H1 (cell line): ENCODE measurements at regions of chr2 and their contacts with region 1.

Region 1: DNA sequence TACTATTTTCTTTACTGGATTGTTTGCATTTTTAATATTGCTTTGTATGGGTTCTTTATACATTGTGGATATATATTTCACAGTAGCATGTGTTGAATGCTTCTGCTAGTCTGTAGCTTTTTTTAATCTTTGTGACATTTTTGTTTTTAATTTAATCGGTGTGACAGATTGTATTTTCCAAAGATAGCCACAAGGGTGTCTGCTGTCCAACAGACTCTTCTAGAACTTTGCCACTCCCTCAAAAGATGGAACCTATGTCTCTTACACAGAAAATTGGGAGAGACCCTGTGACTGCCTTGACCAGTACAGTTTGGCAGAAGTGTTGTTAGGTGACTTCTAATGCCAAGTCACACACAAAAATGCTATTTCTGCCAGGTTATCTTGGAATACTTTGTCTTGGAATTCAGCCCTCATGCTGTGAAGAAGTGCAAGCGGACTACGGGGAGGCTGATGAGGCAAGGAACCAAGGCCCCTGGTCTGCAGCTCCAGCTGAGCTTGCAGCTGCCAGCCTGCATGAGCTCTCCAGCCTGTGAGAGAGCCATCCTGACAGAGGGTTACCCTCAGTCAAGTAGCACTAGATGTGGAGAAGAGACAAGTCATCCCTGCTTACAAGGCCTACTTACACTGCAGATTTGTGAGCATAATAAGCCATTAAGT is 110.8 kb downstream of the TDRD15 start:
- DNase-seq: no peak
- H3K4me3 ChIP-seq: no peak overlapping the region
- H3K27ac ChIP-seq: no peak overlapping the region
- H3K4me1 ChIP-seq: no peaks in the 10 kb centered on the region
- H3K27me3 ChIP-seq: no peaks in the 10 kb centered on the region
- CTCF ChIP-seq: no peak
- EP300 ChIP-seq: no peak
- POLR2A ChIP-seq: no peak
- RAD21 ChIP-seq: no peak

Region 2: DNA sequence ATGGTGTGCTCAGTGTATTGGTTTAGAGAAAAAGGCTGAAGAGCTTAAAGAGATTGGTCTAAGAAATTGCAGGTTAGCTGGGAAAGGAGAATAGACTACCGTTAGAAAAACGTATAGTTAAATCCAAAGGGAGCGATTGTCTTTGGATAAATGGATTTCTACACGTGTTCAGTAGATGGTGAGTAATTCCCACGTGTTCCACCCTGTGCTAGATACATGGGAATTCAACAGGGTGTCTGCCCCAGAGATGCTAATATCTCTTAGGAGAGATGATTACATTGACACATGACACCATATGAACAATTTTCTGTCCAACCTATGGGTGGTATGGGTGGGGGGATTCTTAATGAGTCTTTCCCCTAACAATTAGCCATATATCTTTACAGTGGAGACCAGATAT is 11.0 kb before region 1 on chr2:
- CTCF ChIA-PET with region 1: interaction called, 15 read pairs
- POLR2A ChIA-PET with region 1: no interaction called
- DNase-seq: no peak
- H3K4me3 ChIP-seq: no peak overlapping the region
- H3K27ac ChIP-seq: no peak overlapping the region
- H3K4me1 ChIP-seq: no peaks in the 10 kb centered on the region; a peak in 1 of 7 replicates
- H3K27me3 ChIP-seq: no peaks in the 10 kb centered on the region
- CTCF ChIP-seq: no peak
- EP300 ChIP-seq: no peak
- POLR2A ChIP-seq: no peak
- RAD21 ChIP-seq: no peak

Region 3: DNA sequence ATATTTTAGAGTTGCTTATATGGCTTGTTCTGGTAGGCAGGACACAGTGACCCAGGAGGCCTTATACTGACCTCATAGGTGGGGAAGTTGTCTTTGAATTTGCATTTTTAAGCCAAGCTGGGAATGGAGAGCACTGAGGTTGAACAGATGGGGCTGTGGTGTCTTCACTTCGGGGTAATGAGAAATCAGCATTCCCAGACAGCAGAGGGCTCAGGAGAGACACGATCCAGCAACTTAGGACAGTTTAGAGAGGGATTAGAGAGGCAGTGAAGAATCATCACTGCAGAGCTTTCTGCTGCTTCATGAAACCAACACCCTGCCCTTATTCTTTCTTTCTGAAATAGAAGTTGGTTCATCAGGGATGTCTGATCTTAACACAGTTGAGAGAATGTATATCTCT is 91.6 kb after region 1 on chr2:
- CTCF ChIA-PET with region 1: no interaction called
- POLR2A ChIA-PET with region 1: no interaction called
- DNase-seq: no peak
- H3K4me3 ChIP-seq: no peak overlapping the region
- H3K27ac ChIP-seq: no peak overlapping the region
- H3K4me1 ChIP-seq: no peaks in the 10 kb centered on the region
- H3K27me3 ChIP-seq: no peaks in the 10 kb centered on the region
- CTCF ChIP-seq: no peak
- EP300 ChIP-seq: no peak
- POLR2A ChIP-seq: no peak
- RAD21 ChIP-seq: peak; percentile 22 to 33; a peak in 3 of 4 replicates